CD4-positive, alpha-beta memory T cell (primary cell): ENCODE measurements at regions of chr1 and their contacts with region 1.

Region 1: DNA sequence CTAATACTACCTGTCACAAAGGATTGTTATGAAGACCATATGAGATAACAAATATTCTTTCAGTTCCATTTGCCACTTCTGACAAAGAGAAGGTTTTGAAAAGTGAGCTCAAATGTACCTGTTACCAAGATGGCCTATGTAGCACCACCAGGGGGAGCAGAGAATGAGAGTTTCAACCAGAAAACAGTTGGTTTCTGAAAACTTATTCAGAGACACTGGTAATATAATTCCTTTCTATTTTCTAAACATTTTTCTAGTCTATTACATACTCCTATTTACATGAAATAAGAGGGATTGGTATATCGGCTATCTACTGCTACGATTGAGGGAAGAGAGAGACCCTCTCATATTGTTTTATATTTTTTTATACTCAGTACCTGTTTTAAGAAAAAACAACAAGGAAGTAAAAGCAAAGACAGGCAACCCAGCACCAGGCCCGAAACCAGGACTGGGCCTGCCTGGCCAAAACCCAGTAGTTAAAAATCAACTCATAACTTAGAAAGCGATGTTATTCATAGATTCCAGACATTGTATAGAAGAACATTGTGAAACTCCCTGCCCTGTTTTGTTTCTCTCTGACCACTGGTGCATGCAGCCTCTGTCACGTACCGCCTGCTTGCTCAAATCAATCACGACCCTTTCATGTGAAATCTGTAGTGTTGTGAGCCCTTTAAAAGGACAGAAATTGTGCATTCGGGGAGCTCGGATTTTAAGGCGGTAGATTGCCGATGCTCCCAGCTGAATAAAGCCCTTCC is 48.3 kb downstream of the IL23R start:
- DNase-seq: peak; percentile 41 to 53 (median 45)
- H3K4me3 ChIP-seq: no peak overlapping the region
- H3K4me3 Mint-ChIP-seq: no peak overlapping the region
- H3K27ac ChIP-seq: no peak overlapping the region
- H3K27ac Mint-ChIP-seq: peak overlapping the region in 1 of 7 donors; percentile 0
- H3K4me1 ChIP-seq: peaks cover 14% of the 10 kb centered on the region
- H3K4me1 Mint-ChIP-seq: peaks cover 10 to 18% (median 14%) of the 10 kb centered on the region in 4 donors
- H3K27me3 ChIP-seq: no peaks in the 10 kb centered on the region
- H3K27me3 Mint-ChIP-seq: no peaks in the 10 kb centered on the region

Region 2: GRCh38 chr1:66996018-66996682 is 218.4 kb before region 1 on chr1:
- CTCF ChIA-PET with region 1: interaction called, 67 read pairs
- POLR2A ChIA-PET with region 1: interaction called, 4 read pairs
- intact Hi-C with region 1: loop called (anchors 1 kb)
- DNase-seq: peak; percentile 50 to 63 (median 60)
- H3K4me3 ChIP-seq: no peak overlapping the region
- H3K4me3 Mint-ChIP-seq: no peak overlapping the region
- H3K27ac ChIP-seq: no peak overlapping the region
- H3K27ac Mint-ChIP-seq: peak overlapping the region in 1 of 7 donors; percentile 30
- H3K4me1 ChIP-seq: peaks cover 14% of the 10 kb centered on the region
- H3K4me1 Mint-ChIP-seq: peaks cover 10 to 21% (median 19%) of the 10 kb centered on the region in 4 donors
- H3K27me3 ChIP-seq: no peaks in the 10 kb centered on the region
- H3K27me3 Mint-ChIP-seq: no peaks in the 10 kb centered on the region

Region 3: GRCh38 chr1:67149179-67149770 is 65.3 kb before region 1 on chr1:
- CTCF ChIA-PET with region 1: interaction called, 212 read pairs
- POLR2A ChIA-PET with region 1: interaction called, 5 read pairs
- intact Hi-C with region 1: loop called (anchors 1 kb)
- DNase-seq: peak; percentile 43 to 62 (median 56)
- H3K4me3 ChIP-seq: no peak overlapping the region
- H3K4me3 Mint-ChIP-seq: peak overlapping the region in 1 of 8 donors; percentile 23
- H3K27ac ChIP-seq: no peak overlapping the region
- H3K27ac Mint-ChIP-seq: peak overlapping the region in 1 of 7 donors; percentile 14
- H3K4me1 ChIP-seq: peaks cover 18% of the 10 kb centered on the region
- H3K4me1 Mint-ChIP-seq: peaks cover 17 to 38% (median 23%) of the 10 kb centered on the region in 4 donors
- H3K27me3 ChIP-seq: no peaks in the 10 kb centered on the region
- H3K27me3 Mint-ChIP-seq: peaks cover 1 to 2% of the 10 kb centered on the region in 2 donors

Region 4: DNA sequence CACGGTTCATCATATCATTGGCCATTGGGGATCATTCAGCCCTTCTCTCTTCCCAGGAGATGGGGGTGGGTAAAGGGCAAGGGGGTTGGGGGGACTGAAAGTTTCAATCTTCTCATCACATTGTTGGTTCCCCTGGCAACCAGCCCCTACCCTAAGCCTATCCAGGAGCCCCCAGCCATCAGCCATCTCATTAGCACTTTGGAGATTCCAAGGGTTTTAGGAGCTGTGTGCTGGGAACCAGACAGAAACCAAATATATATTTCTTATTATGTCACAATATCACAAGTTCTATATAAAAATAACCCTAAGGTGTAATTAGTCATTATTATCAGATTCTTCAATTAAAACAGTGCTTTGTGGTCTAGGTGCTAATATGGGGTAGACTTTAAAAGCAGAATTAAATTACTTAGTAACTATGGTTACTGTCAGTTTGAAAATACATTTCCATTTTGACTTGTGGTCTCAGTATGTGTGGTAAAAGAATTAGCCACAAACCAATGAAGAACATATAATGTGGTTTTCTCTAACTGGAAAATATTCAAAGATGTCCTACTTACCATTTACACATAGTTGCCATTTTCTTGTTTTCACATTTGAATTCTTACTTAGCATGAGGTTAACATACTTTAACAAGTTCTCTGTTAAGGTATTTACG is 20.3 kb before region 1 on chr1:
- CTCF ChIA-PET with region 1: interaction called, 21 read pairs
- POLR2A ChIA-PET with region 1: no interaction called
- intact Hi-C with region 1: no loop called
- DNase-seq: peak; percentile 36 to 78 (median 72)
- H3K4me3 ChIP-seq: peak overlapping the region in 1 of 2 donors; percentile 24
- H3K4me3 Mint-ChIP-seq: peak overlapping the region in 7 of 8 donors; percentile 5 to 65 (median 47)
- H3K27ac ChIP-seq: no peak overlapping the region
- H3K27ac Mint-ChIP-seq: peak overlapping the region in 6 of 7 donors; percentile 29 to 85 (median 78)
- H3K4me1 ChIP-seq: peaks cover 50% of the 10 kb centered on the region
- H3K4me1 Mint-ChIP-seq: peaks cover 4 to 38% (median 21%) of the 10 kb centered on the region in 4 donors
- H3K27me3 ChIP-seq: no peaks in the 10 kb centered on the region
- H3K27me3 Mint-ChIP-seq: no peaks in the 10 kb centered on the region

Region 5: DNA sequence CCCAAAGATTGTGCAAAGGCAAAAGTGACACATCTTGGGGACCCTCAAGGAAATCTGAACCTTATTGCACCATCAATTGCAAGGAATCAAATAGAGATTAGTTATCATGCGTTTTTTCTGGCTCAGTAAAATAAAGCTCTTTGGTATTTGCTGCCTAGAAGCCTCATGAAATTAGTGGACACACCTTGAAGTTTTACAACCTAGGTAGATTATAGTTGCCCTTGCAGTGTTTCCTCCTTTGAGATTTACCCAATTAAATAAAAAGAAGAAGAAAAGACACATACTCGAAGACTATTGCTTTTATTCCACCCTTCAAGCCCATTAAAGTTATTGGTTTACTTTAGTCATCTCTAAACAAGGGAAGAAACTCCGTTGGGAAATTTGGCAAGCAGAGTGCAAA is 21.7 kb after region 1 on chr1:
- CTCF ChIA-PET with region 1: interaction called, 13 read pairs
- POLR2A ChIA-PET with region 1: no interaction called
- intact Hi-C with region 1: no loop called
- DNase-seq: no peak
- H3K4me3 ChIP-seq: no peak overlapping the region
- H3K4me3 Mint-ChIP-seq: no peak overlapping the region
- H3K27ac ChIP-seq: no peak overlapping the region
- H3K27ac Mint-ChIP-seq: no peak overlapping the region
- H3K4me1 ChIP-seq: no peaks in the 10 kb centered on the region
- H3K4me1 Mint-ChIP-seq: no peaks in the 10 kb centered on the region
- H3K27me3 ChIP-seq: no peaks in the 10 kb centered on the region
- H3K27me3 Mint-ChIP-seq: no peaks in the 10 kb centered on the region